ENCODE measurements at regions of chr2 and their contacts with region 1.

Region 1: DNA sequence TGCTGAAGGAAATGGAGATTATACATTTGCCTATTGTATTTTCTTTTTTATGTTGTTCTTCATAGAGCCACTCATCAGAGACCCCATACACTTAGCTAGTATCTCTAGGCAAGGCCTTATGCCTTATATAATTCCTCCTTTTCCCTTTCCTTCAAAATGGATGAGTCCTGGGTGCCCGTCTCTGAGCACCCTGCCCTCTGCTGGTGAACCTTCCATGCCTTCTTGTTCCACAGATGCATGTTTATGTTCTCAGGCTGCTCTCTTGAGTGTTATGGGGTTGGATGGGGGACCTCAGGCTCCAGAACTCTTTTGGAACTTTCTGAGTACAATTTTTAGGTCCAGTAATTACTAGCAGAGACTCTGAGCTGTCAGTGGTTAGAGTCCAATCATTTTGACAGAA is 368.6 kb upstream of the SPRED2 start:
- DNase-seq: no peak
- ATAC-seq: no peak
- H3K4me3 ChIP-seq: no peak overlapping the region
- H3K27ac ChIP-seq: no peak overlapping the region
- H3K4me1 ChIP-seq: peaks cover 0 to 9% (median 0%) of the 10 kb centered on the region in 12 donors
- H3K27me3 ChIP-seq: no peaks in the 10 kb centered on the region
- CTCF ChIP-seq: peak in 4 of 12 donors; percentile 9 to 30 (median 20)
- POLR2A ChIP-seq: no peak

Region 2: GRCh38 chr2:65640793-65641103 is 160.2 kb before region 1 on chr2:
- intact Hi-C with region 1: loop called in 1 of 10 experiments (anchors 5 kb)
- DNase-seq: no peak
- ATAC-seq: no peak
- H3K4me3 ChIP-seq: no peak overlapping the region
- H3K27ac ChIP-seq: no peak overlapping the region
- H3K4me1 ChIP-seq: no peaks in the 10 kb centered on the region
- H3K27me3 ChIP-seq: peaks cover 0 to 13% (median 0%) of the 10 kb centered on the region in 9 donors
- CTCF ChIP-seq: no peak
- POLR2A ChIP-seq: no peak

Region 3: GRCh38 chr2:65820454-65820853 is 19.5 kb after region 1 on chr2:
- intact Hi-C with region 1: loop called in 1 of 10 experiments (anchors 1 kb)
- DNase-seq: no peak
- ATAC-seq: no peak
- H3K4me3 ChIP-seq: no peak overlapping the region
- H3K27ac ChIP-seq: no peak overlapping the region
- H3K4me1 ChIP-seq: no peaks in the 10 kb centered on the region
- H3K27me3 ChIP-seq: peaks cover 0 to 3% (median 0%) of the 10 kb centered on the region in 9 donors
- CTCF ChIP-seq: no peak
- POLR2A ChIP-seq: no peak

Region 4: DNA sequence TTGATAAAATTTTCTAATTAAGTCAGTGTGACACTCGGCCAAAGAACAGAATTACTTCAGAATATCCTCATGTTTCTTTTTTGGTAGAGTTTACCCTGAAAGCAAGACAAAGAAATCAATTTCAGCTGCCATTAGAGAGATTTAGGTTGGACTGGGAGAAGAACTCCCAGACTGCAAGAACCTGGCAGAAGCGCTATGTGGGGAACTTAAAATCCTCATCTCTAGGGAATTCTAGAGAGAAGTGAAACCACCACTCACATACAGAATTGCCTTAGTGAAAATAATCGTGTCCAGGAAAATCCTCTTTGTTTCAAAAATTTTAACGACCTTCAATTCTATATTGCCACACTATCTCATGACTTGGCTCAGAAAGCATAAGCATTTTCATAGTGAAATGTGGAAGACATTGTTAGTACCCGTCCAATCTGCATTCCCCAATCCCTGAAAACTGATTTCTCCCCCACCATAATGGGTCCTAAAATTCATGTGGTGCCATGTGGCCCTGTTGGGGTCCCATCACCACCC is 336.7 kb after region 1 on chr2:
- intact Hi-C with region 1: no loop called
- DNase-seq: no peak
- ATAC-seq: no peak
- H3K4me3 ChIP-seq: no peak overlapping the region
- H3K27ac ChIP-seq: no peak overlapping the region
- H3K4me1 ChIP-seq: no peaks in the 10 kb centered on the region
- H3K27me3 ChIP-seq: no peaks in the 10 kb centered on the region
- CTCF ChIP-seq: no peak
- POLR2A ChIP-seq: no peak

Measured in heart left ventricle (tissue), 16 donors.